Activated CD4-positive, alpha-beta T cell treated with anti-CD3 and anti-CD28 coated beads for 36 hours (primary cell): ENCODE measurements at regions of chr5 and their contacts with region 1.

Region 1: GRCh38 chr5:139403787-139404483 is at the start of gene SPATA24:
- DNase-seq: peak; percentile 100
- ATAC-seq: peak; percentile 93
- H3K4me3 Mint-ChIP-seq: peak within 1 kb of the TSS; percentile 79
- H3K27ac Mint-ChIP-seq: peak within 1 kb of the TSS; percentile 99
- H3K4me1 Mint-ChIP-seq: peaks cover 37% of the 10 kb centered on the region
- H3K27me3 Mint-ChIP-seq: no peaks in the 10 kb centered on the region
- total RNA-seq, gene SPATA24: 4.6 to 5.9 TPM

Region 2: GRCh38 chr5:139197710-139198669 is 205.9 kb before region 1 on chr5 and contains the start of gene SIL1:
- CTCF ChIA-PET with region 1: no interaction called
- POLR2A ChIA-PET with region 1: no interaction called
- intact Hi-C with region 1: loop called (anchors 1 to 10 kb)
- DNase-seq: peak; percentile 98
- ATAC-seq: peak; percentile 100
- H3K4me3 Mint-ChIP-seq: peak within 1 kb of the TSS; percentile 90
- H3K27ac Mint-ChIP-seq: peak within 1 kb of the TSS; percentile 97
- H3K4me1 Mint-ChIP-seq: peaks cover 18% of the 10 kb centered on the region
- H3K27me3 Mint-ChIP-seq: peaks cover 2% of the 10 kb centered on the region
- total RNA-seq, gene SIL1: 11.2 to 14.4 TPM

Region 3: GRCh38 chr5:139293504-139294373 is 110.2 kb before region 1 on chr5 and contains the start of gene MATR3:
- CTCF ChIA-PET with region 1: interaction called, 3 read pairs
- POLR2A ChIA-PET with region 1: no interaction called
- intact Hi-C with region 1: loop called in 1 of 2 experiments (anchors 5 kb)
- DNase-seq: peak; percentile 98
- ATAC-seq: peak; percentile 92
- H3K4me3 Mint-ChIP-seq: peak within 1 kb of the TSS; percentile 97
- H3K27ac Mint-ChIP-seq: peak within 1 kb of the TSS; percentile 99
- H3K4me1 Mint-ChIP-seq: peaks cover 37% of the 10 kb centered on the region
- H3K27me3 Mint-ChIP-seq: no peaks in the 10 kb centered on the region
- total RNA-seq, gene MATR3: 113 to 133 TPM

Region 4: DNA sequence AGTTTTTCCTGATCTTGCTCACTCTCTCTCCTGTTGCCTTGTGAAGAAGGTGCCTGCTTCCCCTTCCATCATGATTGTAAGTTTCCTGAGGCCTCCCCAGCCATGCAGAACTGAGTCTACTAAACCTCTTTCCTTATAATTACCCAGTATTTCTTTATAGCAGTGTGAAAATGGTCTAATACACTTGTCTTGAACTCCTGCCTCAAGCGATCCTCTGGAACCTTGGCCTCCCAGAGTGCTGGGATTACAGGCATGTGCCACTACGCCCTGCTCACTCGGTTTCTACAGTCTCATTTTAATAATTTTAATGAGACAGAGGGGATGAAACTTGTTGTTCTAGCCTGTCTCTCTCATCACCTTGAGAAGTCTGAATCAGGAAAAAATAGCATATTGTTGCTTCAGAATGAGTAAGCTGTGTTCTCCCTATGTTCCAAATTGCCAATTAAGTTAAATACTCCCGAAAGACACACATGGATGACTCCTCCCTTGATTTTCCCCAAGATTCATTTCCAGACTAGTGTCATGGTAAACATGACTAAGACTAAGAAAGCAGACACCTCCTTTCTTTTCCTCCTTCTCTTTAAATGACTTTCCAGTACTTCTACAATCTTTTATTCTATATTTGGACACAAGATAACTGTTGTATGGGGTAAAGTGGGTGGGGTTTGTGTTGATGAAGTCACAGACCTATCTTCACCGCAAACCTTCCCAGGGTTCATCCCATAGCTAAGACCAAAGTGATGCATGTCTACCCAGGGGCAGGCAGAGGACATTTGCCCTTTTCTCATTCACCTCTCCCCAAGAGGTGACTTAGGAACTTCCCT is 43.2 kb after region 1 on chr5:
- CTCF ChIA-PET with region 1: interaction called, 3 read pairs
- POLR2A ChIA-PET with region 1: no interaction called
- intact Hi-C with region 1: loop called (anchors 2 to 5 kb)
- DNase-seq: peak; percentile 68
- ATAC-seq: peak; percentile 77
- H3K4me3 Mint-ChIP-seq: peak overlapping the region; percentile 1
- H3K27ac Mint-ChIP-seq: peak overlapping the region; percentile 92
- H3K4me1 Mint-ChIP-seq: peaks cover 66% of the 10 kb centered on the region
- H3K27me3 Mint-ChIP-seq: no peaks in the 10 kb centered on the region

Region 5: GRCh38 chr5:139711067-139711905 is 307.4 kb after region 1 on chr5:
- CTCF ChIA-PET with region 1: no interaction called
- POLR2A ChIA-PET with region 1: no interaction called
- intact Hi-C with region 1: no loop called
- DNase-seq: peak; percentile 78
- ATAC-seq: peak; percentile 84
- H3K4me3 Mint-ChIP-seq: peak overlapping the region; percentile 52
- H3K27ac Mint-ChIP-seq: no peak overlapping the region
- H3K4me1 Mint-ChIP-seq: peaks cover 13% of the 10 kb centered on the region
- H3K27me3 Mint-ChIP-seq: peaks cover 5% of the 10 kb centered on the region